ENCODE measurements at regions of chr6 and their contacts with region 1.

Region 1: DNA sequence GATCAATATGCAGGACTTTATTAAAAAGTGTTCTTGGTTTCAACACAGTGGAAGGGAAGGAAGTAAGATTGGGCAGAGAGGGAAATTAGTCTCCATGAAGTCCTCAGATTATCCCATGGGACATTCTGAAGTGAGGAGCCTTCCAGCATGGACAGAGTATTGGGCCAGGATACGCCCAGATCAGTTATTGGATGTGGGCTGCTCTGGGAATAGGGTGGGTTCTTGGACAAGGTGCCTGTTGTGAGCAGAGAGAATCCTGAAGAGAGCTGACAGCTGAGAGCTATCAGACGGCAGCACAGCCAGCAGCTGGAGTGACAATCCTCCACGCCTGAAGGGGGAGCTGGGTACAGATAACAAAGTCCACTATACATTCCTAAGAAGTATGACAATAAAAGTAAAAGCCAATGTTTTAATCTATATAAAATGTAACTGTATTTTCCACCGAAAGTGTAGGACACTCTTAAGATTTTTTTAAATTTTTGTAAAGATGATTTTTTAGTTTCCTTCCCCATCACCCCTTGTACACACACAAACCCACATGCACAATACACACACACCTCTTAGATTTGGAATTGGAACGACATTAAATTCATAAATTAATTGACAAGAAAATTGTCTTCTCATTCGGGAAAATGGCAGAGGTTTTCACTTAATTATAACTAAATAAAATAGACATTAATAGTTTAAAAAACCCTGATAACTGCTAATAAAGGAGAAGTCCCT is 107.8 kb downstream of the FBXO5 start:
- DNase-seq: no peak
- H3K4me3 ChIP-seq: no peak overlapping the region
- H3K27ac ChIP-seq: no peak overlapping the region
- H3K4me1 ChIP-seq: no peaks in the 10 kb centered on the region
- H3K27me3 ChIP-seq: peaks cover 0 to 9% (median 0%) of the 10 kb centered on the region in 7 donors
- CTCF ChIP-seq: no peak
- POLR2A ChIP-seq: no peak

Region 2: DNA sequence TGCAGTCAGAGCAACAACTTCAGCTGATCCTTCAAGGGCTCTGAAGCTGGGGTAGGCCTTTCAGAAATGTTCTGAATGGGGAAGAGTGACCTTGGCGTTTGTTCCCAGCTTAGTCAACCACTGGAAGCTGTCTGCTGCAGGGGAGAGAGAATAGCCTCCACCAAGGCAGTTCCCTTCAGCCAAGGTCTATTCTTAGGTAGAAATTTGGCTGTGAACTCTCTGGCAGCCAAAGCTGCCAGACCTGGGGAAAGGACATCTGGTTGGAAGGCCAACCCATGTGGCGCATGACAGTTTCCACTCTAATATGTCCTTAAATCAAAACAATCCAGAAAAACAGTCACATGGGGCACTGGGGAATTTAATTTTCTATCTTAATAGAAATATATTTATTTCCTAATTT is 47.7 kb after region 1 on chr6:
- intact Hi-C with region 1: loop called (anchors 10 kb)
- DNase-seq: no peak
- H3K4me3 ChIP-seq: no peak overlapping the region
- H3K27ac ChIP-seq: no peak overlapping the region
- H3K4me1 ChIP-seq: no peaks in the 10 kb centered on the region
- H3K27me3 ChIP-seq: no peaks in the 10 kb centered on the region
- CTCF ChIP-seq: no peak
- POLR2A ChIP-seq: no peak

Measured in spleen (tissue), 13 donors.